ENCODE measurements at regions of chr6 and their contacts with region 1.

Region 1: GRCh38 chr6:24581084-24581669 is 64.8 kb downstream of the KIAA0319 start:
- DNase-seq: peak in 4 of 5 donors; percentile 65 to 83 (median 78)
- H3K4me3 ChIP-seq: no peak overlapping the region
- H3K27ac ChIP-seq: no peak overlapping the region
- H3K4me1 ChIP-seq: no peaks in the 10 kb centered on the region
- H3K27me3 ChIP-seq: no peaks in the 10 kb centered on the region
- CTCF ChIP-seq: peak; percentile 73

Region 2: DNA sequence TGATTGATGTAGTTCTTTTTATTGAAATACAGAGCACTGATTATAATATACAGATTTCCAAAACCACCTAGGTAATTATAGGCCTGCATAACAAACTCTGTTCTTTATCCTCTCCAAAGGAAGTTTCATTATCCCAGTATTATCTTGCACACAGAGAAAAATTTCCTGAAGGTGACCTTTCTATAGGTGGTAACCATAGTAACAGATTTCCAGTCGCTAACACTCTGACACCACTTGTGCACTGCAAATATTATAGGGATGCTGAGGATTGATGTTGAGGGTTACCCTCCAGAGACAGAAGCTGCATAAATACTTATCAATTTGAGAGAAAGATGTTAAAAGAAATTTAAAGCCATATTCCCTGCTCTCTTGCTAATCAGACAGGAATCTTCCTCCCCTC is 729.7 kb before region 1 on chr6:
- intact Hi-C with region 1: no loop called
- DNase-seq: no peak
- H3K4me3 ChIP-seq: no peak overlapping the region
- H3K27ac ChIP-seq: no peak overlapping the region
- H3K4me1 ChIP-seq: no peaks in the 10 kb centered on the region
- H3K27me3 ChIP-seq: no peaks in the 10 kb centered on the region
- CTCF ChIP-seq: no peak

Region 3: GRCh38 chr6:24630856-24631505 is 49.8 kb after region 1 on chr6:
- intact Hi-C with region 1: no loop called
- DNase-seq: peak in 1 of 5 donors; percentile 34
- H3K4me3 ChIP-seq: no peak overlapping the region
- H3K27ac ChIP-seq: no peak overlapping the region
- H3K4me1 ChIP-seq: no peaks in the 10 kb centered on the region
- H3K27me3 ChIP-seq: no peaks in the 10 kb centered on the region
- CTCF ChIP-seq: no peak

Region 4: DNA sequence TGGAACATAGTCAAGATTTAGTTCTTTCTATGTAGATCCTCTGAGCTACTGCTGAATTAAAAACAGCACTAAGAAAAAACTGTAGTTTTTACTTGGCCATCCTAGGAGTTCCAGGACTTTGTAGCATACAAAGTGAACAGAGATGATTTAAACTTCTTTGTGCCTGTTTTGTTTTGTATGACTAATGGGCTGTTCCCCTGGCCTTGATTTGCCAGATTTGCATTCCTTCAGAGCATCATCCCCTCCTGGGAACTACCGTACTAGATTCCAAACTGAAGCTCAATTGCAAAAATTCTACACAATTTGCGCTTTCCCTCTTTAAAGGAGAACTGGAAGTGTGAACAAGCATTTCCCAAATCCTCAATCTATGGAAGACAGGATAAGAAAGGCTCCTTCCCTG is 108.8 kb after region 1 on chr6:
- intact Hi-C with region 1: loop called (anchors 10 kb)
- DNase-seq: no peak
- H3K4me3 ChIP-seq: no peak overlapping the region
- H3K27ac ChIP-seq: no peak overlapping the region
- H3K4me1 ChIP-seq: no peaks in the 10 kb centered on the region
- H3K27me3 ChIP-seq: no peaks in the 10 kb centered on the region
- CTCF ChIP-seq: no peak

Region 5: DNA sequence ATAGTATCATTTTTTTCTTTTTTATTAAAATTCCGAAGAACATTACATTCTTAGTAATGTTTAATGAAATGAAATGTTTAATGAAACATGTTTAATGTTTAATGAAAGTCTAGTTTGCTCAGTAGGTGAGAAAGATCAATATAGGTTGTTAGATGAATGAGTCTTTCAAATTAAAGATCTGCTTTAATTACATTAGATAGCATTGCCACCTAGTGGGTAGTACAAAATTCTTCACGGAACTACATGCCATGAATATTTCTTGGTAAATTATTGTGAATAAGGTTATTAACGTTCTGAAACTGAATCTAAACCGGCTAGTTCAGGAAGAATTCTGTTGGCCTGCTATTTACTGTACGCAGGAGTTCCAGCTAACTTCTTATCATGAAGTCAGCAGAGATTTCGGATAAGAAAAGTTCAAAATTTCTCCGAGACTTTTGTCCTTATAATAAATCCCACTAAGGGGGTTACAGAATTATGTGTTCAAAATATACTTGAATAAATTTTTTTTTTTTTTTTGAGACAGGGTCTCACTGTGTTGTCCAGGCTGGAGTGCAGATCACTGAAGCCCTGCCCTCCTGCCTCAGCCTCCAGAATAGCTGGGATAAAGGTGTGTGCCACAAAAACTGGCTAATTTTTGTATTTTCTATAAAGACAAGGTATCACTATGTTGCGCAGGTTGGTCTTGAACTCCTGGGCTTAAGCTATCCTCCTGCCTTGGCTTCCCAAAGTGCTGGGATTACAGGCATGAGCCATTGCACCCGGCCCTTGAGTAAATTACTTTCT is 185.7 kb after region 1 on chr6:
- intact Hi-C with region 1: loop called (anchors 10 kb)
- DNase-seq: peak in 2 of 5 donors; percentile 25 to 33
- H3K4me3 ChIP-seq: no peak overlapping the region
- H3K27ac ChIP-seq: no peak overlapping the region
- H3K4me1 ChIP-seq: no peaks in the 10 kb centered on the region
- H3K27me3 ChIP-seq: no peaks in the 10 kb centered on the region
- CTCF ChIP-seq: peak; percentile 35

Region 6: DNA sequence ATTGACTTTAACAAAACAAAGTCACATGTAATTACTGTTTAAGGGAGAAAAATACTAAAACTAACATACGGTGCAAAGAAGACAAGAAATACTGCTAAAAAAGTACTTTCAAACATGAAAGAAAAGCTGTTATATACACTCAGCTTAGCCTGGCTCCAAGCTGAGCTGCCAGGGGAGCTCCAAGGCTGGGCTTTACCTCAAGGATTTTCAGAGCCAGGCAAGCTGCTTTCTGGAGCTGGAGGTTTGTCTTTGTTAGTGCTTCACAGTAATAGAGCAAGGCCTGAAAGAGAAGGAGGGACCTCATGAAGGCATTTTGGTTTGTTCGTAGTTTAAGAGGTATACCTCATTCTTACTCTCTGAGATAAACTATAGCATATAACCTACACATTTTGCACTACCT is 237.2 kb after region 1 on chr6:
- intact Hi-C with region 1: no loop called
- DNase-seq: no peak
- H3K4me3 ChIP-seq: no peak overlapping the region
- H3K27ac ChIP-seq: no peak overlapping the region
- H3K4me1 ChIP-seq: no peaks in the 10 kb centered on the region
- H3K27me3 ChIP-seq: no peaks in the 10 kb centered on the region
- CTCF ChIP-seq: no peak